Adrenal gland (tissue), 19 donors: ENCODE measurements at regions of chr12 and their contacts with region 1.

Region 1: GRCh38 chr12:46933947-46934346 is 108.2 kb upstream of the SLC38A4 start:
- DNase-seq: peak in 1 of 7 donors; percentile 5
- H3K4me3 ChIP-seq: no peak overlapping the region
- H3K27ac ChIP-seq: no peak overlapping the region
- H3K4me1 ChIP-seq: no peaks in the 10 kb centered on the region
- H3K27me3 ChIP-seq: no peaks in the 10 kb centered on the region
- CTCF ChIP-seq: peak; percentile 28 to 66 (median 54)
- POLR2A ChIP-seq: no peak

Region 2: DNA sequence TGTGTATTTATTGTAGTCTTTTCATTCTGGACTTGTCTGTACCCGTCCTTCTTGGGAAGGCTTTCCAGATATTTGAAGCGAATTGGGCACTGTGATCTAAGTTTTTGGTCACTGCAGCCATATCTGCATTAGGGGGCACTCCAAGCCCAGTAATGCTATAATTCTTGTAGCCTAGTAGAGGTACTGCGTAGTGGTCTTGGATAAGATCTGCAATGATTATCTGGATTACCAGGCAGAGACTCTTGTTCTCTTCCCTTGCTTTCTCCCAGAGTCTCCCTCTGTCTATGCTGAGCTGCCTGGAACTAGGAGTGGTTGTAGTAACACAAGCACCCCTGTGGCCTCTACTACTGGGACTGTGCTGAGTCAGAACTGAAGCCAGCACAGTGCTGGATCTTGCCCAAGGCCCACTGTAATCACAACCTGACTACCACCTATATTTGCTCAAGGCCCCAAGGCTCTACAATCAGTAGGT is 591.3 kb before region 1 on chr12:
- intact Hi-C with region 1: loop called in 1 of 2 experiments (anchors 10 kb)
- DNase-seq: peak in 5 of 7 donors; percentile 20 to 58 (median 35)
- H3K4me3 ChIP-seq: no peak overlapping the region
- H3K27ac ChIP-seq: no peak overlapping the region
- H3K4me1 ChIP-seq: no peaks in the 10 kb centered on the region
- H3K27me3 ChIP-seq: no peaks in the 10 kb centered on the region
- CTCF ChIP-seq: peak; percentile 16 to 73 (median 62)
- POLR2A ChIP-seq: no peak